SK-N-SH (cell line): ENCODE measurements at regions of chr17 and their contacts with region 1.

Region 1: DNA sequence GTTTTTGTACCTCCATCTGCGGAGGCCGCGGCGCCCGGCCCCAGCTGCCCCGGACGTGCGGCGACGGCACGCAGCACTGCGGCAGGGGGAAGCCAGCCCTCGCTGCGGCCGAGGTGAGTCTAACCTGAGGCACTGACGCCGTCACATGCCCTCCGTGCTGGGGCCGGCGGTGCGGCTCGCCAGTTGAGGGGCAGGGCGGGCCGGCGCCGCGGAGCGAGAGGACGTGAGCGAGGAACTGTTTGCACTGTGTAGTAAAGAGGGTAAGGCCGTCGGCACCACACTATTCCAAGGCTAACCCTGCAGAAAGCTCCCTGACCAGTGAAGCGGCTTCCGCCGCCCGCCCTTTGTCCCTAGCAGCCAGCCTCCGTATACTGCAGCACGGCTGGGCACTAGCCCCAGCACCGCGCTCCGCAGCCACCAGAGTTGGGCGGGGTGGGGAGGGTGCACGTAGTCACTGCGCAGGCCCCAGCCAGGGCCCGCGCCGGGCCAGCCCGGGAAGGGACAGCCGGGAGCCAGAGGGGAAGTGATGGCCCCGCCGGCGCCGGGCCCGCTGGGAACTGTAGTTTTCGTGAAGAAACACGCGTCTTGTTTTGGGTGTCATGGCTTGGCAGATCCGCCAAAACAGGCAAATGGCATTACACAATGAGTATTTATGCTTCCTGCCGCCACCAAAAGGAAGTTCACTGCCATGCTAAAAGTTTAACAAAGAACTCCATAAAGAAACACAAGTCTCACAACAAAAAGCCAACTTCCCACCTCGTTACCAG is 580 bp upstream of the KANSL1 start:
- DNase-seq: peak; percentile 98
- H3K4me3 ChIP-seq: peak overlapping the region; percentile 76 to 78
- H3K27ac ChIP-seq: peak overlapping the region; percentile 85 to 97
- H3K4me1 ChIP-seq: peaks cover 14 to 15% of the 10 kb centered on the region in 2 experiments; a peak in 3 of 4 replicates
- H3K27me3 ChIP-seq: no peaks in the 10 kb centered on the region
- CTCF ChIP-seq: peak; percentile 31
- EP300 ChIP-seq: peak; percentile 2 to 11; a peak in 2 of 4 replicates
- RAD21 ChIP-seq: no peak

Region 2: DNA sequence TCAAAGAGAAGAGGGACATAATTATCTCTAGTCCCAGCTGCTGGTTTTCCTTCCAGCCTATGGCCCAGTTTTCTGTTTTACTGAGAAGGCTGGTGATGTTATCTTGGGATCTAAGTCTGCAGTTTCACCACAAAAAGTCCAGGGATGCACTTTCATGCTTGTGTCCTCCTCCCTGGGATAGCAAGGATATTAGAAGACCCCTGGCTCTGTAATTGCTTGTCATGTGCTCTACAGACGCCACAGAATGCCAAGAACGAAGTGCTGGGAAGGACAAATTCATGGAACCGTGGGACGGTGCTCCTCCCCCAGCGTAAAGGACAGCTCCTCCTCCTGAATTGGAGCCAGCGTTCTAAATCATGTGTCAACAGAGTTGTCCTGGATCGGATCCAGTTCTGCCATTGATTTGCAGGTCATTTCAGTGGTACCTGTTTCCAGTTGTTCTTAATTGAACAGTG is 290.9 kb before region 1 on chr17:
- CTCF ChIA-PET with region 1: no interaction called
- POLR2A ChIA-PET with region 1: no interaction called
- DNase-seq: peak; percentile 65
- H3K4me3 ChIP-seq: peak overlapping the region in 1 of 2 experiments; percentile 5; a peak in 1 of 4 replicates
- H3K27ac ChIP-seq: peak overlapping the region in 1 of 2 experiments; percentile 83; a peak in 2 of 4 replicates
- H3K4me1 ChIP-seq: peaks cover 0 to 43% of the 10 kb centered on the region in 2 experiments; a peak in 2 of 4 replicates
- H3K27me3 ChIP-seq: peaks cover 66% of the 10 kb centered on the region
- CTCF ChIP-seq: no peak
- EP300 ChIP-seq: peak in 1 of 2 experiments; percentile 38; a peak in 1 of 4 replicates
- RAD21 ChIP-seq: no peak; the same call in 1 of the 2 replicates

Region 3: DNA sequence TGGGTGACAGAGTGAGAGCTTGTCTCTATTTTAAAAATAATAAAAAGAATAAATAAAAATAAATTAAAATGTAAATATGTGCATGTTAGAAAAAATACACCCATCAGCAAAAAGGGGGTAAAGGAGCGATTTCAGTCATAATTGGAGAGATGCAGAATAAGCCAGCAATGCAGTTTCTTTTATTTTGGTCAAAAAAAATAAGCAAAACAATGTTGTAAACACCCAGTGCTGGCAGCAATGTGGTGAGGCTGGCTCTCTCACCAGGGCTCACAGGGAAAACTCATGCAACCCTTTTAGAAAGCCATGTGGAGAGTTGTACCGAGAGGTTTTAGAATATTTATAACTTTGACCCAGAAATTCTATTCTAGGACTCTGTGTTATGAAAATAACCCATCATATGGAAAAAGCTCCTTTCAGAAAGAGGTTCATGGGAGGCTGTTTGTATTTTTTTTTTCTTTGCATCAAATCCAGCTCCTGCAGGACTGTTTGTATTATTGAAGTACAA is 186.3 kb before region 1 on chr17:
- CTCF ChIA-PET with region 1: interaction called, 41 read pairs
- POLR2A ChIA-PET with region 1: no interaction called
- DNase-seq: no peak
- H3K4me3 ChIP-seq: no peak overlapping the region
- H3K27ac ChIP-seq: no peak overlapping the region
- H3K4me1 ChIP-seq: peaks cover 0 to 9% of the 10 kb centered on the region in 2 experiments; a peak in 1 of 4 replicates
- H3K27me3 ChIP-seq: no peaks in the 10 kb centered on the region
- CTCF ChIP-seq: no peak
- EP300 ChIP-seq: no peak
- RAD21 ChIP-seq: no peak

Region 4: DNA sequence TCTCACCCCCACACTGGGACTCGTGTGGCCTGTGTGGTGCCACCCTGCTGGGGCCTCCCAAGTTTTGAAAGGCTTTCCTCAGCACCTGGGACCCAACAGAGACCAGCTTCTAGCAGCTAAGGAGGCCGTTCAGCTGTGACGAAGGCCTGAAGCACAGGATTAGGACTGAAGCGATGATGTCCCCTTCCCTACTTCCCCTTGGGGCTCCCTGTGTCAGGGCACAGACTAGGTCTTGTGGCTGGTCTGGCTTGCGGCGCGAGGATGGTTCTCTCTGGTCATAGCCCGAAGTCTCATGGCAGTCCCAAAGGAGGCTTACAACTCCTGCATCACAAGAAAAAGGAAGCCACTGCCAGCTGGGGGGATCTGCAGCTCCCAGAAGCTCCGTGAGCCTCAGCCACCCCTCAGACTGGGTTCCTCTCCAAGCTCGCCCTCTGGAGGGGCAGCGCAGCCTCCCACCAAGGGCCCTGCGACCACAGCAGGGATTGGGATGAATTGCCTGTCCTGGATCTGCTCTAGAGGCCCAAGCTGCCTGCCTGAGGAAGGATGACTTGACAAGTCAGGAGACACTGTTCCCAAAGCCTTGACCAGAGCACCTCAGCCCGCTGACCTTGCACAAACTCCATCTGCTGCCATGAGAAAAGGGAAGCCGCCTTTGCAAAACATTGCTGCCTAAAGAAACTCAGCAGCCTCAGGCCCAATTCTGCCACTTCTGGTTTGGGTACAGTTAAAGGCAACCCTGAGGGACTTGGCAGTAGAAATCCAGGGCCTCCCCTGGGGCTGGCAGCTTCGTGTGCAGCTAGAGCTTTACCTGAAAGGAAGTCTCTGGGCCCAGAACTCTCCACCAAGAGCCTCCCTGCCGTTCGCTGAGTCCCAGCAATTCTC is 167.4 kb before region 1 on chr17:
- CTCF ChIA-PET with region 1: interaction called, 14 read pairs
- POLR2A ChIA-PET with region 1: interaction called, 6 read pairs
- DNase-seq: no peak
- H3K4me3 ChIP-seq: no peak overlapping the region
- H3K27ac ChIP-seq: no peak overlapping the region; a peak in 1 of 4 replicates
- H3K4me1 ChIP-seq: peaks cover 0 to 14% of the 10 kb centered on the region in 2 experiments; a peak in 1 of 4 replicates
- H3K27me3 ChIP-seq: no peaks in the 10 kb centered on the region
- CTCF ChIP-seq: no peak
- EP300 ChIP-seq: no peak
- RAD21 ChIP-seq: no peak

Region 5: DNA sequence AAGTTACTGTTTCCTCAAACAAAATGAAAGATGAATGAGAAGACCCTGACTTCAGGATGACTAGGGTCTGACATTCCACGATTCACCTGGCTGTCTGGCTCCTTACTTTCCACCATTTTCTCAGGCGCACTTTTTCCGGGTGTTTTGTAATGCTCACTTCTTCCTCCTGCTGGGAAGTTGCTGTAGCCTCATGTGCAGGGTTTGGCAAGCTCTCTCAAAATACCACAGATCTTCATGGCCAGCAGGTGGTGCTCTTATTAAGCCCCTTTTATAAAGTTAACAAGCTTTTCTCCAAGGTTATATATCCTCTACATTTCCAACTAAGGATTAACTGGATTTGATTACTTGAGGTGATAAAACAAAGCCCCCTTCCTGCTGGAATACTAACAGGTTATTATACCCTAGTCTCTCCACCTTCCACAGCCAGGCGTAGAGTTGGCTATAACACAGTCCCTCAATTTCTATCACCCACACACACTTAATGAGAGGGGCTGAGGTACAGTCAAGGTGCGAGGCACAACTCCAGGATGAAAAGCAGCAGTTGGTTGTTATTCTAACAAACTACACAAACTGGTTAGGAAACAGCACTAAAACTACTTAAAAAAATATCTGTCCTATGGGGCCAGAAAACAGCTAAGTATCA is 149.4 kb before region 1 on chr17:
- CTCF ChIA-PET with region 1: interaction called, 21 read pairs
- POLR2A ChIA-PET with region 1: interaction called, 5 read pairs
- DNase-seq: peak; percentile 70
- H3K4me3 ChIP-seq: no peak overlapping the region
- H3K27ac ChIP-seq: peak overlapping the region; percentile 2 to 9; a peak in 1 of 4 replicates
- H3K4me1 ChIP-seq: peaks cover 4 to 10% of the 10 kb centered on the region in 2 experiments; a peak in 3 of 4 replicates
- H3K27me3 ChIP-seq: no peaks in the 10 kb centered on the region
- CTCF ChIP-seq: peak; percentile 99
- EP300 ChIP-seq: no peak
- RAD21 ChIP-seq: peak; percentile 83

Region 6: GRCh38 chr17:46121165-46121764 is 72.5 kb before region 1 on chr17:
- CTCF ChIA-PET with region 1: interaction called, 14 read pairs
- POLR2A ChIA-PET with region 1: interaction called, 3 read pairs
- DNase-seq: no peak
- H3K4me3 ChIP-seq: no peak overlapping the region; a peak in 1 of 4 replicates
- H3K27ac ChIP-seq: no peak overlapping the region
- H3K4me1 ChIP-seq: peaks cover 3 to 5% of the 10 kb centered on the region in 2 experiments; a peak in 2 of 4 replicates
- H3K27me3 ChIP-seq: no peaks in the 10 kb centered on the region
- CTCF ChIP-seq: no peak
- EP300 ChIP-seq: no peak
- RAD21 ChIP-seq: no peak

Region 7: GRCh38 chr17:46179375-46179999 is 14.3 kb before region 1 on chr17:
- CTCF ChIA-PET with region 1: interaction called, 68 read pairs
- POLR2A ChIA-PET with region 1: no interaction called
- DNase-seq: no peak
- H3K4me3 ChIP-seq: no peak overlapping the region
- H3K27ac ChIP-seq: no peak overlapping the region
- H3K4me1 ChIP-seq: peaks cover 1 to 14% of the 10 kb centered on the region in 2 experiments
- H3K27me3 ChIP-seq: no peaks in the 10 kb centered on the region
- CTCF ChIP-seq: no peak
- EP300 ChIP-seq: no peak
- RAD21 ChIP-seq: no peak

Region 8: GRCh38 chr17:46266656-46267544 is 73.1 kb after region 1 on chr17:
- CTCF ChIA-PET with region 1: interaction called, 21 read pairs
- POLR2A ChIA-PET with region 1: interaction called, 8 read pairs
- DNase-seq: peak; percentile 100
- H3K4me3 ChIP-seq: peak overlapping the region; percentile 59 to 91
- H3K27ac ChIP-seq: peak overlapping the region; percentile 80 to 81
- H3K4me1 ChIP-seq: peaks cover 5 to 6% of the 10 kb centered on the region in 2 experiments; a peak in 2 of 4 replicates
- H3K27me3 ChIP-seq: no peaks in the 10 kb centered on the region
- CTCF ChIP-seq: no peak; the same call in 1 of the 2 replicates
- EP300 ChIP-seq: no peak
- RAD21 ChIP-seq: no peak